ENCODE measurements at regions of chr11 and their contacts with region 1.

Region 1: GRCh38 chr11:2933384-2934020 is 4.3 kb upstream of the PHLDA2 start:
- DNase-seq: peak; percentile 47
- H3K4me3 ChIP-seq: no peak overlapping the region
- H3K27ac ChIP-seq: no peak overlapping the region
- H3K4me1 ChIP-seq: peaks cover 13% of the 10 kb centered on the region
- H3K27me3 ChIP-seq: no peaks in the 10 kb centered on the region
- CTCF ChIP-seq: no peak

Region 2: DNA sequence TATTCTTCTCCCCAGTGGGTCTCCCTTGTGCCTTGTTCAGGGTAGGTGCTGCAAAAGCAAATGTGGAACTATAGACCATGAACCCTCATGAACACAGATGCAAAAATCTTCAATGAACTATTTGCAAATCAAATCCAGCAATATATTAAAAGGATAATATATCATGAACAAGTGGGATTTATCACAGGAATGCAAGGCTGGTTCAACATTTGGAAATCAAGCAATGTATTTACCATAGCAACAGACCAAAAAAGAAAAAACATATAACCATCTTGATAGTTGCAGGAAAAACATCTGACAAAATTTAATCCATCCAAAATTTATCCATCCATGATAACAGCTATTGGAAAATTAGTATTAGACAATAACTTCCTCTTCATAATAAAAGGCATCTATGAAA is 243.0 kb after region 1 on chr11:
- CTCF ChIA-PET with region 1: no interaction called
- POLR2A ChIA-PET with region 1: interaction called, 13 read pairs
- intact Hi-C with region 1: no loop called
- DNase-seq: no peak
- H3K4me3 ChIP-seq: no peak overlapping the region
- H3K27ac ChIP-seq: no peak overlapping the region
- H3K4me1 ChIP-seq: no peaks in the 10 kb centered on the region
- H3K27me3 ChIP-seq: no peaks in the 10 kb centered on the region
- CTCF ChIP-seq: no peak

Measured in A673 (cell line).